ENCODE measurements at regions of chr15 and their contacts with region 1.

Region 1: DNA sequence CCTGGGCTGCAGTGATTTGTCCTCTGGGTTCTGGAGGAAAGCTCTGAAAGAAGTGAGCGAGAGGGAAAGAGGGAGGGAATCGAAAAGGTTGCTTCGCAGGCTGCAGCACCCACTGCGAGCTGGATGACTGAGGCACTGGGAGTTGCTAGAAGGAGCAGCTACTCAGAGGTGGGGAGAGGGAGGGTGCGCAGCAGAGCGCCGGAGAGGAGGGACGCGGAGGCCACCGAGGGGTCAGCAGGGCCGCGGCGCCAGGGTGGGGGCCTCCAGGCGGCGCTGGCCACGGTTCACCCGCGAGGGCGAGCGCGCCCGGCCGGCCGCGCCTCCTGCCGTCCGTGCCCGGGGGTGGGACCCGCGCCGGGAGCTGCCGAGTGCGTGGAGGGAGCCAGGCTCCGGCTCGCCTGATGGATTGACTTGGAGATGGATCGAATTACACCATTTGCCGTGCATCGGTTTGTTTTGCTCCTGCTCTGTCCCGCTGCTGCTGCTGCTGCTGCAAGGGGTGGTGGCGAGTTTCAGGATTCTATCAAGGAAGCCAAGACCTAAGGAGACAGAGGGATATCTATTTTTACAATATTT is at the start of gene SEMA6D:
- DNase-seq: peak; percentile 77 to 84 (median 81)
- H3K4me3 ChIP-seq: peak within 1 kb of the TSS; percentile 69
- H3K27ac ChIP-seq: peak within 1 kb of the TSS; percentile 79 to 95
- H3K4me1 ChIP-seq: peaks cover 6% of the 10 kb centered on the region
- H3K27me3 ChIP-seq: no peaks in the 10 kb centered on the region
- CTCF ChIP-seq: peak; percentile 29 to 49 (median 47)
- EP300 ChIP-seq: no peak
- POLR2A ChIP-seq: peak; percentile 17
- total RNA-seq, gene SEMA6D: 19.8 to 45.3 (median 30.1) TPM

Region 2: GRCh38 chr15:47473832-47474231 is 243.3 kb before region 1 on chr15:
- intact Hi-C with region 1: loop called in 1 of 4 experiments (anchors 5 kb)
- DNase-seq: peak; percentile 46 to 70 (median 65)
- H3K4me3 ChIP-seq: no peak overlapping the region
- H3K27ac ChIP-seq: peak overlapping the region in 1 of 2 donors; percentile 64
- H3K4me1 ChIP-seq: peaks cover 8% of the 10 kb centered on the region
- H3K27me3 ChIP-seq: no peaks in the 10 kb centered on the region
- CTCF ChIP-seq: no peak
- EP300 ChIP-seq: no peak
- POLR2A ChIP-seq: no peak

Region 3: GRCh38 chr15:47553947-47554346 is 163.2 kb before region 1 on chr15:
- intact Hi-C with region 1: no loop called
- DNase-seq: no peak
- H3K4me3 ChIP-seq: no peak overlapping the region
- H3K27ac ChIP-seq: no peak overlapping the region
- H3K4me1 ChIP-seq: no peaks in the 10 kb centered on the region
- H3K27me3 ChIP-seq: no peaks in the 10 kb centered on the region
- CTCF ChIP-seq: no peak
- EP300 ChIP-seq: no peak
- POLR2A ChIP-seq: no peak

Region 4: GRCh38 chr15:47607695-47608094 is 109.4 kb before region 1 on chr15:
- intact Hi-C with region 1: no loop called
- DNase-seq: peak in 4 of 5 donors; percentile 27 to 53 (median 41)
- H3K4me3 ChIP-seq: no peak overlapping the region
- H3K27ac ChIP-seq: no peak overlapping the region
- H3K4me1 ChIP-seq: peaks cover 2% of the 10 kb centered on the region
- H3K27me3 ChIP-seq: no peaks in the 10 kb centered on the region
- CTCF ChIP-seq: no peak
- EP300 ChIP-seq: no peak
- POLR2A ChIP-seq: no peak

Region 5: GRCh38 chr15:47639042-47639441 is 78.1 kb before region 1 on chr15:
- intact Hi-C with region 1: no loop called
- DNase-seq: no peak
- H3K4me3 ChIP-seq: no peak overlapping the region
- H3K27ac ChIP-seq: no peak overlapping the region
- H3K4me1 ChIP-seq: no peaks in the 10 kb centered on the region
- H3K27me3 ChIP-seq: no peaks in the 10 kb centered on the region
- CTCF ChIP-seq: no peak
- EP300 ChIP-seq: no peak
- POLR2A ChIP-seq: no peak

Region 6: DNA sequence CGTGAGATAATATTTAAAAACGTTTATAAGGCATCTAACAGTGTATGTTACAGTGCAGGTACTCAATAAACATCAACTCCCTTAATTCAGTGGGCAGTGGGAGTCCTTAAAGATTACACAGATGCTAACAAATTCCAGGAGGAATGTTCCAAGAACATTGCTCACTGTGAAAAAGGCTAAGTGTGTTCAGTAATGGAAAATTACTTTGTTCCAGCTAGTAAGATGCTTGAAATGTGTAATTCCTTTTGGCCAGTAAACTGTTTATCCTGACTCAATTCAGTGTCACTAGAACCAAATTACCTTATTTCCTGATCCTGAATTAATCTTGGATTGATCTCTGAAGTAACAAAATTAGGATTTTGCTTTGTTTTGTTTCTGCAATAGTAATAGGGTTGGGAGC is 54.0 kb before region 1 on chr15:
- intact Hi-C with region 1: no loop called
- DNase-seq: no peak
- H3K4me3 ChIP-seq: no peak overlapping the region
- H3K27ac ChIP-seq: no peak overlapping the region
- H3K4me1 ChIP-seq: peaks cover 2% of the 10 kb centered on the region
- H3K27me3 ChIP-seq: no peaks in the 10 kb centered on the region
- CTCF ChIP-seq: no peak
- EP300 ChIP-seq: no peak
- POLR2A ChIP-seq: no peak

Region 7: DNA sequence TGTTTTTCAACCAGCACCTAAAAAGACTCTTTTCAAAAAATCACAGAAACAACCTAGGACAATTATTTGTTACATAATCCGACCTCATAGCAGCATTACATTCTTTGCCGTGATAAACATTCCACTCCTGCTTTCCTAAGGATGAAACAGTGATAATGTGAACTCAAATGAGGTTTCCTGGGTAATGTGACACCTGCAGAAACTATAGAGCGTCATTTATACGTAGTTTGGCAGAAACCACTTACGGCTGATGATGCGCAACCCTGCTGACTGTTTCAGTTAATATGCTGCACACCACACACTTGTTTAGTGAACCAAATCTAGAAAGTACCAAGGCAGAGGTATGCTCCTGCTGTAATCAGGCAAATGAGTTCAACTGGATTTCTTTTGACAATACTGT is 56.0 kb after region 1 on chr15:
- intact Hi-C with region 1: loop called in 1 of 4 experiments (anchors 10 kb)
- DNase-seq: no peak
- H3K4me3 ChIP-seq: no peak overlapping the region
- H3K27ac ChIP-seq: no peak overlapping the region
- H3K4me1 ChIP-seq: peaks cover 6% of the 10 kb centered on the region
- H3K27me3 ChIP-seq: no peaks in the 10 kb centered on the region
- CTCF ChIP-seq: no peak
- EP300 ChIP-seq: no peak
- POLR2A ChIP-seq: no peak

Measured in ovary (tissue), 10 donors.